ENCODE measurements at regions of chr4 and their contacts with region 1.

Region 1: GRCh38 chr4:183182873-183183725 is 84.0 kb downstream of the WWC2 start:
- DNase-seq: peak in 4 of 5 donors; percentile 68 to 91 (median 84)
- H3K4me3 ChIP-seq: no peak overlapping the region
- H3K27ac ChIP-seq: no peak overlapping the region
- H3K4me1 ChIP-seq: peaks cover 0 to 8% (median 2%) of the 10 kb centered on the region in 3 donors
- H3K27me3 ChIP-seq: no peaks in the 10 kb centered on the region
- CTCF ChIP-seq: no peak

Region 2: GRCh38 chr4:183241322-183241640 is 58.2 kb after region 1 on chr4:
- intact Hi-C with region 1: loop called (anchors 10 kb)
- DNase-seq: no peak
- H3K4me3 ChIP-seq: no peak overlapping the region
- H3K27ac ChIP-seq: no peak overlapping the region
- H3K4me1 ChIP-seq: peaks cover 0 to 9% (median 0%) of the 10 kb centered on the region in 3 donors
- H3K27me3 ChIP-seq: no peaks in the 10 kb centered on the region
- CTCF ChIP-seq: no peak